ENCODE measurements at regions of chr6 and their contacts with region 1.

Region 1: GRCh38 chr6:38012573-38012972 is 193.0 kb downstream of the ZFAND3 start:
- DNase-seq: no peak

Region 2: GRCh38 chr6:37705239-37706051 is 307.1 kb before region 1 on chr6:
- intact Hi-C with region 1: loop called in 1 of 2 experiments (anchors 10 kb)
- DNase-seq: peak; percentile 94

Region 3: DNA sequence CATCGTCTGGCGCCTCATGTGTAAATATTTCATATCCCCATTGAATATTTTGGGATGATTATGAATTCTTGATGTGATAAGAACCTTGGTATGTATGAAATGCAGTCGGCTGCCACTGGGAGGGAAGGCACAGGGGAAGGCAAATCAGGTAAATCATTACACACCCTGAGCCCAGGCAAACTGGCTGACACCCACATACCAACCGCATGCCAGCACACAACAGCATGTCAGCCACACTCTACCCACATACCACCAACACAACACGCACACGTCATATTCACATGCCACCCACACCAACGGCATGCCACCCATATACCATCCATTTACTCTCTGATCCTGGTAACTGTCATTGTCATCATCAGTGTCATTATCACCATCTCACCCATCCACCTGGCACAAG is 286.6 kb before region 1 on chr6:
- intact Hi-C with region 1: loop called in 1 of 2 experiments (anchors 10 kb)
- DNase-seq: no peak

Region 4: GRCh38 chr6:37791156-37791919 is 221.2 kb before region 1 on chr6:
- intact Hi-C with region 1: loop called in 1 of 2 experiments (anchors 5 kb)
- DNase-seq: peak; percentile 97

Region 5: GRCh38 chr6:39471954-39472659 is 1459.5 kb after region 1 on chr6:
- intact Hi-C with region 1: no loop called
- DNase-seq: no peak

Measured in posterior vena cava (tissue), 2 donors.